Left ventricle myocardium superior (tissue), 1 donor: ENCODE measurements at regions of chr2 and their contacts with region 1.

Region 1: GRCh38 chr2:189698020-189698887 is 23.8 kb downstream of the ANKAR start:
- DNase-seq: no peak
- ATAC-seq: peak; percentile 62

Region 2: GRCh38 chr2:189661148-189661956 is 36.9 kb before region 1 on chr2 and contains the start of gene ASNSD1:
- intact Hi-C with region 1: loop called (anchors 5 kb)
- DNase-seq: peak; percentile 100
- ATAC-seq: peak; percentile 95
- total RNA-seq, gene ASNSD1: 33.0 TPM